PC-3 (cell line): ENCODE measurements at regions of chr5 and their contacts with region 1.

Region 1: DNA sequence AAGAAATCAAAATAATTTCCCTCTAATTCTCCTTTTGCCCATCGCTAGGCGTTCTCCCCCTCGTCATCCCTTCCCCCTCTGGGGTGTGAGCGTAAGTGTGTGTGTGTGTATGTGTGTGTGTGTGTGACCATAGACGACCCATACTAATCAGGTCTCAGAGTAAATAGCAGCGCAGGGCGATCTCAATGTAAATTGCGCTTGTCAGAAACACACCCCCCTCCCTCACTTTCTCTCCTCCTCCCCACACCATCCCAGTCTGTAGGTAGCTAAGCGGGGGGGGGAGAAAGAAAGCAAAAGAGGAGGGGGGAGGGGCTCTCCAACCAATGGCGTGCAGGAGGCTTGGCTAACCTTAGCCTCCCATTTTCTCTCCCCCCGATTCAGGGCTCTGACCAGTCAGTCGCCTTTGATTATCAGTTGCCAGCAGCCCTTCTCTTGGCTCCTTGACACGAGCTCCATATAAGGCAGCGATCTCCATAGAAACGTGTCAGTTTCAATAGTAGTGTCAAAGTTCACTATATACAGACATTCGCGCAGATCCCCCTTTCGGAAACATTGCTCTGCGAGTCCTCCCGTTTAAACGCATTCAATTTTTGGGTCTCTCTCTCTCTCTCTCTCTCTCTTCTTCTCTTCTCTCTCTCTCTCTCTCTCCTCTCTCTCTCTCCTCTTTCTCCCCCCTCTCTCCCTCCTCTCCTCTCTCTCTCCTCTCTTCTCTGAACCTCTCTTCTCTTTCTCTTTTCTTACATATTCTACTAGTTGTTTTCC is at the start of gene NR2F1:
- DNase-seq: peak; percentile 98
- ATAC-seq: peak; percentile 50
- H3K4me3 ChIP-seq: peak within 1 kb of the TSS; percentile 86
- H3K27ac ChIP-seq: peak within 1 kb of the TSS; percentile 70
- H3K4me1 ChIP-seq: peaks cover 20% of the 10 kb centered on the region
- H3K27me3 ChIP-seq: no peaks in the 10 kb centered on the region
- CTCF ChIP-seq: no peak
- total RNA-seq, gene NR2F1: 88.4 and 118 TPM in 2 replicates

Region 2: GRCh38 chr5:91906494-91906893 is 1676.4 kb before region 1 on chr5:
- CTCF ChIA-PET with region 1: no interaction called
- POLR2A ChIA-PET with region 1: no interaction called
- intact Hi-C with region 1: loop called (anchors 5 kb)
- DNase-seq: peak; percentile 67
- ATAC-seq: peak; percentile 79
- H3K4me3 ChIP-seq: peak overlapping the region; percentile 15; the same call in 1 of the 2 replicates
- H3K27ac ChIP-seq: peak overlapping the region; percentile 88
- H3K4me1 ChIP-seq: peaks cover 22% of the 10 kb centered on the region
- H3K27me3 ChIP-seq: no peaks in the 10 kb centered on the region
- CTCF ChIP-seq: no peak

Region 3: DNA sequence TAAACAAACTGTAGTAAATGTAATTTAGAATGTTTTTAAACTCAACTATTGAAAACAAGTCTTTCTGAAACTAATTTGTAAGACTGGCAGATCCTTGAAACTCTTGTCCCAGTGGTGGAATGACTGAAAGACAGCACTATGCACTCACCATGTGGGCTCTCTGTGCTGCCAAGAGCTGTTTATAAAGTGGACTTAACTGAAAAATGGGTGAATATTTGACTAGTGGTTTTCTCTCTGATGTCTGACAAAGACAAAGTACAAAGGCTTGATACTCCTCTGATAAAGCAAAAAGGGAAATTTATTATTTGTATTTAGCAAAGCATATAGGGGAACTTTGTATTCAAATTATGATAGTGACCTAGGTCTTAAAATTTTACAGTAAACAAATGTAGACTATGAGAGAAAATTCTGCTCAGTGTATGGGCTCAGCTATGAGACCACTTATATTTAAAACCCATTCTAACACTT is 637.2 kb before region 1 on chr5:
- CTCF ChIA-PET with region 1: no interaction called
- POLR2A ChIA-PET with region 1: no interaction called
- intact Hi-C with region 1: loop called (anchors 10 kb)
- DNase-seq: peak; percentile 62
- ATAC-seq: peak; percentile 53
- H3K4me3 ChIP-seq: peak overlapping the region; percentile 27
- H3K27ac ChIP-seq: peak overlapping the region; percentile 98
- H3K4me1 ChIP-seq: peaks cover 45% of the 10 kb centered on the region
- H3K27me3 ChIP-seq: no peaks in the 10 kb centered on the region
- CTCF ChIP-seq: no peak

Region 4: DNA sequence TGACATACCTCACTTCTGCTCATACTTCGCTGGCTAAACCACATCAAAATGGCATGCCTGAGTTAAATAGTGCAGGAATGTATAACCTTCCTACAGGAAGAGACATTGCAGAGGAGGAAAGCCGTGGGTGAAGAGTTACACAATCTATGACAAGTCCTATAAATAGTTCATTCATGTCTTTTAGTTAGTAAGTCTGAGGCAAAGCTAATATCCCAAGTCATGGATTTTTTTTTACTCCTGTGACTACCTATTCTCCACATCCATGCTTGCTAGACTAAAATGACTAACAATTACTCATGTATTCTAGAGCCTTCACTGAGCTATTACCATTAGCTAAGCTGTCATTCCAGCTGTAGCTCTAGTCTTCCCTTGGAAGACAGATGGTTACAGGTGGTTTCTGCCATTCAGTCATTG is 393.1 kb before region 1 on chr5:
- CTCF ChIA-PET with region 1: interaction called, 3 read pairs
- POLR2A ChIA-PET with region 1: no interaction called
- intact Hi-C with region 1: loop called (anchors 2 kb)
- DNase-seq: peak; percentile 97
- ATAC-seq: peak; percentile 66
- H3K4me3 ChIP-seq: no peak overlapping the region
- H3K27ac ChIP-seq: peak overlapping the region; percentile 88
- H3K4me1 ChIP-seq: peaks cover 66% of the 10 kb centered on the region
- H3K27me3 ChIP-seq: no peaks in the 10 kb centered on the region
- CTCF ChIP-seq: no peak

Region 5: DNA sequence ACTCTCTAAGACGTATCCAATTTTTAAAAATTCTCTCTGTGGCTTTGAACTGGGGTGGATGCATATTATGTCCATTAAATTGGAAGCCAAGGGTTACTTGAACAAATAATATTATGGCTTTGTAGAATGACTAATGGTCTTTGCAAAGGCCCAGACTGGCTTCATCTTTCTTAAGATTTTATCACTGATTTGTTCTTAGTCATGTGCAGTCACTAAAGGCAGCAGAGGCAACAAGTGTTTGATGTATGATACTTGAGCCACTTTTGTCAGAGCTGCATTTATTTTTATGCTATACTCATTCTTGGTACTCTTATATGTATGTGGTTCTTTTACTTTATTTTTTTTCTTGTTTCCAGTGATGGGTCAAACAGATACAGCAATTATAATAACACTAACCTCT is 154.0 kb before region 1 on chr5:
- CTCF ChIA-PET with region 1: no interaction called
- POLR2A ChIA-PET with region 1: no interaction called
- intact Hi-C with region 1: loop called (anchors 5 kb)
- DNase-seq: peak; percentile 91
- ATAC-seq: peak; percentile 95
- H3K4me3 ChIP-seq: no peak overlapping the region
- H3K27ac ChIP-seq: peak overlapping the region; percentile 43
- H3K4me1 ChIP-seq: peaks cover 38% of the 10 kb centered on the region
- H3K27me3 ChIP-seq: no peaks in the 10 kb centered on the region
- CTCF ChIP-seq: no peak

Region 6: GRCh38 chr5:93789173-93790070 is 206.6 kb after region 1 on chr5:
- CTCF ChIA-PET with region 1: interaction called, 6 read pairs
- POLR2A ChIA-PET with region 1: interaction called, 4 read pairs
- intact Hi-C with region 1: loop called (anchors 1 kb)
- DNase-seq: peak; percentile 90
- ATAC-seq: peak; percentile 92
- H3K4me3 ChIP-seq: no peak overlapping the region
- H3K27ac ChIP-seq: peak overlapping the region; percentile 27
- H3K4me1 ChIP-seq: peaks cover 26% of the 10 kb centered on the region
- H3K27me3 ChIP-seq: no peaks in the 10 kb centered on the region
- CTCF ChIP-seq: peak; percentile 62

Region 7: DNA sequence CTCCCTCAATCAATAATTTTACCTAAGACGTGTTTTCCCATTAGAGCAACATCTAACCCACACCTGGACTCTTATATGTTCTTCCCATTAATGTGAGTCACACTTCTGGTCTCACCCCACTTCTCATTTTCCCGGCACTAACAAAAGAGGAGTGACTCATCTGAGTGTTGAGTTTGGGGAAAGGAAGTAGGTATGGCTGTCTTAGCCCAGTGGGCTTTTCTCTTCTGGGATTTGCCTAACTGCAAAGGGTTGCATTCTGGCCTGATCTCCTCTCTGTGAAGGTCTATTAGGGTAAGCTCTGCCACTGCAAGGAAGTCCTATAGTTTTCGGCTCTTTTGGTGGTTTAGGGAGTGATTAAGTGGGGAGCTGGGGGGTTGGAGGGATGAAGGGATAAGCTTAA is 840.0 kb after region 1 on chr5:
- CTCF ChIA-PET with region 1: no interaction called
- POLR2A ChIA-PET with region 1: no interaction called
- intact Hi-C with region 1: no loop called
- DNase-seq: peak; percentile 64
- ATAC-seq: peak; percentile 96
- H3K4me3 ChIP-seq: no peak overlapping the region
- H3K27ac ChIP-seq: no peak overlapping the region
- H3K4me1 ChIP-seq: peaks cover 14% of the 10 kb centered on the region; the same call in 1 of the 2 replicates
- H3K27me3 ChIP-seq: no peaks in the 10 kb centered on the region
- CTCF ChIP-seq: no peak